ENCODE measurements at regions of chr16 and their contacts with region 1.

Region 1: GRCh38 chr16:56789360-56789759 is 59.4 kb downstream of the NUP93 start:
- DNase-seq: peak; percentile 41 to 80
- ATAC-seq: peak; percentile 88 to 91
- H3K4me3 ChIP-seq: no peak overlapping the region
- H3K27ac ChIP-seq: no peak overlapping the region
- H3K4me1 ChIP-seq: peaks cover 4% of the 10 kb centered on the region; the same call in 1 of the 3 replicates
- CTCF ChIP-seq: peak; percentile 63
- EP300 ChIP-seq: no peak
- POLR2A ChIP-seq: no peak
- RAD21 ChIP-seq: peak; percentile 72 to 78

Region 2: DNA sequence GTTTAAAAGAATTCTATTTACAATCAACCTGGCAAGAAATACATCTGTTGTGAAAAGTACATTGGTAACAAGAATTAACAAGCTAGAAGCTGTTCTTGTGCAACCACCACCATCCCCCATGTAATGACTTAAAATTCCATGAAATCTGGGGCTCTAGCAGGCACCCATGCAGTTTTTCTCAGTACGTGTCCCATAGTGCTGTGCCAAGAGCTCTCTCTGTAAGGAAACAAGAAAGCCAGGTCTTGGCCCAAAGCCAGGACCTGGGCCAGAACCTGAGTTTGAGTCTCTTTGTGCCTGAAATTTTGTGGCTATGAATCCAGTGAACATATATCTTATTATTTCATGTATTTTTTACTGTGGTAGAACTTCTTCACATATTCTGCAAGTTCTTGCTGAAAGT is 12.8 kb before region 1 on chr16:
- CTCF ChIA-PET with region 1: interaction called, 19 read pairs
- POLR2A ChIA-PET with region 1: no interaction called
- DNase-seq: no peak
- ATAC-seq: no peak
- H3K4me3 ChIP-seq: no peak overlapping the region
- H3K27ac ChIP-seq: no peak overlapping the region
- H3K4me1 ChIP-seq: no peaks in the 10 kb centered on the region
- CTCF ChIP-seq: no peak
- EP300 ChIP-seq: no peak
- POLR2A ChIP-seq: no peak
- RAD21 ChIP-seq: no peak

Region 3: GRCh38 chr16:56814537-56815432 is 25.4 kb after region 1 on chr16:
- CTCF ChIA-PET with region 1: interaction called, 55 read pairs
- POLR2A ChIA-PET with region 1: no interaction called
- DNase-seq: peak; percentile 67 to 68
- ATAC-seq: peak; percentile 88 to 89
- H3K4me3 ChIP-seq: peak overlapping the region; percentile 22
- H3K27ac ChIP-seq: peak overlapping the region; percentile 86 to 87
- H3K4me1 ChIP-seq: peaks cover 73% of the 10 kb centered on the region
- CTCF ChIP-seq: no peak
- EP300 ChIP-seq: no peak
- POLR2A ChIP-seq: no peak
- RAD21 ChIP-seq: no peak

Region 4: GRCh38 chr16:56851671-56852400 is 62.5 kb after region 1 on chr16:
- CTCF ChIA-PET with region 1: interaction called, 151 read pairs
- POLR2A ChIA-PET with region 1: interaction called, 3 read pairs
- DNase-seq: peak in 1 of 2 experiments; percentile 44
- ATAC-seq: peak in 1 of 2 experiments; percentile 24; a peak in 3 of 6 replicates
- H3K4me3 ChIP-seq: no peak overlapping the region
- H3K27ac ChIP-seq: peak overlapping the region; percentile 1 to 68; a peak in 3 of 6 replicates
- H3K4me1 ChIP-seq: peaks cover 50% of the 10 kb centered on the region
- CTCF ChIP-seq: peak; percentile 41
- EP300 ChIP-seq: no peak
- POLR2A ChIP-seq: no peak
- RAD21 ChIP-seq: peak; percentile 39 to 50; a peak in 3 of 5 replicates

Region 5: DNA sequence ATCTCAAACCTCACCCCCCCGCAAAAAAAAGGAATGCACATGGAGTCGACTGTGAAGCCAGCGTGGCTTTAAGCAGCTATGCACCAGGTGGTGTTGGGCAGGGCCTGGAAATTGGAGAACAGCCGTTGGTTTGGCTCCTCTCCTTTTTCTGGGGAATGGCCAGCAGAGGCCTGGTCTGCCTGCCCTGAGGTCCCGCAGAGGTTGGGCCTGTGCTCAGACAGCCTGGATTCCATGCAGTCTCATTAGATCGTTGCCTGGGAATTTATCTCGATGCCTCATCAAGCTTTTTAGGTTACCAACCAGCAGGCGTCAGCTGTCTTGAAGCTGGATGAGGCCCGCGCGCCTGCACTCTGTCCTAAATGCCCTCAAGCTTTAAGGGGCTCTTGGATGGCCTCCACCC is 85.4 kb after region 1 on chr16:
- CTCF ChIA-PET with region 1: interaction called, 52 read pairs
- POLR2A ChIA-PET with region 1: no interaction called
- DNase-seq: no peak
- ATAC-seq: no peak
- H3K4me3 ChIP-seq: no peak overlapping the region
- H3K27ac ChIP-seq: no peak overlapping the region
- H3K4me1 ChIP-seq: no peaks in the 10 kb centered on the region
- CTCF ChIP-seq: no peak
- EP300 ChIP-seq: no peak
- POLR2A ChIP-seq: no peak
- RAD21 ChIP-seq: no peak

Measured in A549 (cell line).